ENCODE measurements at regions of chr18 and their contacts with region 1.

Region 1: GRCh38 chr18:67628674-67629073 is 112.2 kb upstream of the DSEL start:
- DNase-seq: no peak
- ATAC-seq: no peak
- H3K4me3 ChIP-seq: no peak overlapping the region
- H3K27ac ChIP-seq: no peak overlapping the region
- H3K4me1 ChIP-seq: no peaks in the 10 kb centered on the region
- H3K27me3 ChIP-seq: no peaks in the 10 kb centered on the region
- CTCF ChIP-seq: no peak

Region 2: DNA sequence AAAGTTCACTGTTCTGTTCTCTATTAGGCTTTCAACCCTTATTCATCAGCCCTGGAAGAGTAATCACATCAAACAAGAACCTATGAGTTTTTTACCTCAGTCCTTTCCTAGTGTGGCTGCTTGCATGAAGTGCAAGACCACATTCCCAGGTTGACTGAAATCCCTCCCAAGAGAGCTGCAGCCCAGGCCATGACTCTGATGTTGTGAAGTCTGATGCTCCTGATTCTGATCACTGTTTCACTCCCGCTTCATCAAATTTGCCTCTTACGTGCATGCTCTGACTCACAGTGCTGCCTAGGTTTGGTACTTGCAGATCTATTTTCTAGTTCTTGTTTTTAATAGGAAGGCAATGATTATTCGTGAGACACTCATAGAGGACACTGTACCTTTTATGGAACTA is 53.9 kb before region 1 on chr18:
- intact Hi-C with region 1: no loop called
- DNase-seq: no peak
- ATAC-seq: no peak
- H3K4me3 ChIP-seq: no peak overlapping the region
- H3K27ac ChIP-seq: no peak overlapping the region
- H3K4me1 ChIP-seq: no peaks in the 10 kb centered on the region
- H3K27me3 ChIP-seq: no peaks in the 10 kb centered on the region
- CTCF ChIP-seq: no peak

Region 3: GRCh38 chr18:67651438-67651837 is 22.8 kb after region 1 on chr18:
- intact Hi-C with region 1: no loop called
- DNase-seq: no peak
- ATAC-seq: peak in 6 of 8 donors; percentile 33 to 89 (median 58)
- H3K4me3 ChIP-seq: no peak overlapping the region
- H3K27ac ChIP-seq: peak overlapping the region in 1 of 10 donors; percentile 15
- H3K4me1 ChIP-seq: peaks cover 0 to 3% (median 0%) of the 10 kb centered on the region in 9 donors
- H3K27me3 ChIP-seq: no peaks in the 10 kb centered on the region
- CTCF ChIP-seq: no peak

Region 4: GRCh38 chr18:67672155-67672554 is 43.5 kb after region 1 on chr18:
- intact Hi-C with region 1: no loop called
- DNase-seq: no peak
- ATAC-seq: no peak
- H3K4me3 ChIP-seq: no peak overlapping the region
- H3K27ac ChIP-seq: no peak overlapping the region
- H3K4me1 ChIP-seq: no peaks in the 10 kb centered on the region
- H3K27me3 ChIP-seq: no peaks in the 10 kb centered on the region
- CTCF ChIP-seq: no peak

Region 5: GRCh38 chr18:67682516-67682915 is 53.8 kb after region 1 on chr18:
- intact Hi-C with region 1: loop called in 1 of 10 experiments (anchors 10 kb)
- DNase-seq: no peak
- ATAC-seq: no peak
- H3K4me3 ChIP-seq: no peak overlapping the region
- H3K27ac ChIP-seq: no peak overlapping the region
- H3K4me1 ChIP-seq: no peaks in the 10 kb centered on the region
- H3K27me3 ChIP-seq: no peaks in the 10 kb centered on the region
- CTCF ChIP-seq: no peak

Measured in heart right ventricle (tissue), 16 donors.